K562 (cell line): ENCODE measurements at regions of chr7 and their contacts with region 1.

Region 1: GRCh38 chr7:55255496-55256435 is 109.4 kb upstream of the LANCL2 start:
- DNase-seq: peak; percentile 69 to 80 (median 76)
- ATAC-seq: peak; percentile 96
- H3K4me3 ChIP-seq: peak overlapping the region; percentile 47
- H3K27ac ChIP-seq: no peak overlapping the region
- H3K4me1 ChIP-seq: peaks cover 0 to 20% of the 10 kb centered on the region in 2 experiments; a peak in 3 of 5 replicates
- H3K27me3 ChIP-seq: peaks cover 0 to 26% of the 10 kb centered on the region in 2 experiments; a peak in 4 of 5 replicates
- CTCF ChIP-seq: peak; percentile 70 to 84 (median 71)
- EP300 ChIP-seq: no peak
- POLR2A ChIP-seq: no peak
- RAD21 ChIP-seq: peak; percentile 83 to 85

Region 2: DNA sequence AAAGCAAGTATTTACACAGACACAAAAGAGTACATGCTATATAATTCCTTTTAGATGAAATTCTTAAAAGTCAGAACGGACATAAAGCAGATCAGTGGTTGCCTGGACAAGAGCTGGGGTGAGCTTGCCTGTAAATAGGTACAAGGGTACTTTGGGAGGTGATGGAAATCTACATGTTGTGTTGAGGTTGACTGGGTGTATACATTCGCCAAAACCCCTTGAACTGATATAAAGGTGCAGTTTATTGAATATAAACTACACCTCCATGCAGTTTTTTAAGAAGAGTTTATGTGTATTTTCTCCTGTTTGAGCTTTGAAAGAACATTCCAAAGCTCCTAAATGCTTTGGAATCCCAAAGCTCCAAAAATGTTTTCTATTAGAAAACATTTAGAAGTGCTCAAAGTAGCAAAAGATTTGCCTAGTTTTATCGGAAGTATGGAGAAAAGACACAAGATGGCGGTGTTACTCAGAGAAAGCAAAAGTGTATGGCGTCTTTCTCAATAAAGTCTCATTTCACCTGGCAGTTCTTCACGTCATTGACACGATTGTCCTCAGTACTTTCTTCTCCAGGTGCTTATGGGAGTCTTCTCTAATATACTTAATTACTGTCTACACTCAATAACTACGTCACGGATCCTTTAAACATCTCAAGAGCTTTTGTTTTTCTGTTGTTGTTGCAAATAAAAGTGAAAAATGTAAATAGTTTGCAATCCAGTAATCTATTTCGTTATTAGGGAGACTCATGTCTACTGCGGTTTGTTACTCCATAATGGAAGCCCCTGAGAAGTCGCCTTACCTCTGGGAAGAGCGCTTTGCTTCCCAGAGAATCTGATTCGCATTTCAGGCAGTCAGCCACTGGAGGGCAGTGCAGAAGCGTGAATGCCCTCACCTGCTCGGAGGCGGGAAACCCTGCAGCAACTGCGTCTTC is 482.0 kb before region 1 on chr7:
- CTCF ChIA-PET with region 1: interaction called, 63 read pairs
- POLR2A ChIA-PET with region 1: no interaction called
- in situ Hi-C with region 1: no loop called
- intact Hi-C with region 1: loop called (anchors 1 kb)
- DNase-seq: peak; percentile 62 to 85 (median 66)
- ATAC-seq: peak; percentile 96
- H3K4me3 ChIP-seq: 0 out of 2 replicates have a peak overlapping the region, but pooled peaks have one; percentile 2
- H3K27ac ChIP-seq: no peak overlapping the region
- H3K4me1 ChIP-seq: no peaks in the 10 kb centered on the region; a peak in 1 of 5 replicates
- H3K27me3 ChIP-seq: peaks cover 2 to 14% of the 10 kb centered on the region in 2 experiments; a peak in 4 of 5 replicates
- CTCF ChIP-seq: peak; percentile 80 to 92 (median 89)
- EP300 ChIP-seq: no peak
- POLR2A ChIP-seq: no peak
- RAD21 ChIP-seq: peak; percentile 78 to 85

Region 3: DNA sequence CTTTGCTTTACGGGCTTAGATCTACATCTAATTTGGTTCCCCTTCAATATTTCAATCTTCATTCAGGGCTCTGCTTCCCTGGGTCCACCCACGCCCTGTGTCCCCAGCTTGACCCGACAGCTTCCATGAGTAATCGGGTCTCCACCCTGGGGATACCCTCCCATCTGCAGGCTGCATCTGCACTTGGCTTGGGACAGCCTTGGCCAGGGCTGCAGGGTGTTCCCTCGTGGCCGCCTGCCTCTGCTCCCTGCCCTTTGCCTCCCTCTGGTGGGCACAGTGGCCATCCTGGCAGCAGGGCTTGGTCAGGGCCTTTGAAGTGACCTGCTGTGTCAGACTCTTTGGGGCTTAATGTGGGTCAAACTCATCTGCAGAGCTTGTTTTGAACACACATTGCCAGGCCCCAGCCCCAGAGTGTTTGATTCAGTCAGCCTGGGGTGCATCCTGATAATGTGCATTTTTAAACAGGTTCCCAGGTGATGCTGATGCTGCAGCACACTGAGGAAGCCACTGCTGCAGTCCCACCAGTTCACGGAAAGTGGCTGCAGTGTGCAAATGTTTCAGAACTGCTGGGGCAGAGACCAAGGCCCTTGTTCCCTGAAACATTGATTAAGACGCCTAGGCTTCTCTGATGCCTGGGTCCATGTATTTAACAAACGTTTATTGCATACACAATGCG is 416.1 kb before region 1 on chr7:
- CTCF ChIA-PET with region 1: no interaction called
- POLR2A ChIA-PET with region 1: no interaction called
- in situ Hi-C with region 1: no loop called
- intact Hi-C with region 1: loop called (anchors 10 kb)
- DNase-seq: peak in 2 of 4 experiments; percentile 11 to 13
- ATAC-seq: peak; percentile 60
- H3K4me3 ChIP-seq: no peak overlapping the region
- H3K27ac ChIP-seq: no peak overlapping the region
- H3K4me1 ChIP-seq: peaks cover 0 to 5% of the 10 kb centered on the region in 2 experiments; a peak in 2 of 5 replicates
- H3K27me3 ChIP-seq: peaks cover 0 to 25% of the 10 kb centered on the region in 2 experiments; a peak in 2 of 5 replicates
- CTCF ChIP-seq: peak in 2 of 3 experiments; percentile 27 to 42; a peak in 4 of 6 replicates
- EP300 ChIP-seq: no peak
- POLR2A ChIP-seq: no peak
- RAD21 ChIP-seq: peak in 1 of 2 experiments; percentile 21; a peak in 1 of 4 replicates

Region 4: GRCh38 chr7:55053651-55054571 is 201.9 kb before region 1 on chr7:
- CTCF ChIA-PET with region 1: interaction called, 10 read pairs
- POLR2A ChIA-PET with region 1: no interaction called
- in situ Hi-C with region 1: no loop called
- intact Hi-C with region 1: loop called (anchors 10 kb)
- DNase-seq: no peak
- ATAC-seq: no peak
- H3K4me3 ChIP-seq: no peak overlapping the region
- H3K27ac ChIP-seq: no peak overlapping the region
- H3K4me1 ChIP-seq: no peaks in the 10 kb centered on the region
- H3K27me3 ChIP-seq: peaks cover 13 to 43% of the 10 kb centered on the region in 2 experiments; a peak in 3 of 5 replicates
- CTCF ChIP-seq: no peak
- EP300 ChIP-seq: no peak
- POLR2A ChIP-seq: no peak
- RAD21 ChIP-seq: no peak

Region 5: GRCh38 chr7:55177589-55178261 is 78.0 kb before region 1 on chr7:
- CTCF ChIA-PET with region 1: no interaction called
- POLR2A ChIA-PET with region 1: no interaction called
- in situ Hi-C with region 1: no loop called
- intact Hi-C with region 1: loop called (anchors 10 kb)
- DNase-seq: no peak
- ATAC-seq: no peak
- H3K4me3 ChIP-seq: no peak overlapping the region
- H3K27ac ChIP-seq: no peak overlapping the region
- H3K4me1 ChIP-seq: no peaks in the 10 kb centered on the region
- H3K27me3 ChIP-seq: peaks cover 12 to 64% of the 10 kb centered on the region in 2 experiments
- CTCF ChIP-seq: no peak
- EP300 ChIP-seq: no peak
- POLR2A ChIP-seq: no peak
- RAD21 ChIP-seq: no peak